Common myeloid progenitor, CD34-positive (primary cell): ENCODE measurements at regions of chr11 and their contacts with region 1.

Region 1: GRCh38 chr11:122754553-122755322 is 83.6 kb upstream of the CRTAM start:
- DNase-seq: peak; percentile 51 to 68 (median 65)
- H3K4me3 ChIP-seq: no peak overlapping the region
- H3K27ac ChIP-seq: no peak overlapping the region
- H3K4me1 ChIP-seq: peaks cover 14 to 76% (median 60%) of the 10 kb centered on the region in 4 experiments
- H3K27me3 ChIP-seq: no peaks in the 10 kb centered on the region

Region 2: DNA sequence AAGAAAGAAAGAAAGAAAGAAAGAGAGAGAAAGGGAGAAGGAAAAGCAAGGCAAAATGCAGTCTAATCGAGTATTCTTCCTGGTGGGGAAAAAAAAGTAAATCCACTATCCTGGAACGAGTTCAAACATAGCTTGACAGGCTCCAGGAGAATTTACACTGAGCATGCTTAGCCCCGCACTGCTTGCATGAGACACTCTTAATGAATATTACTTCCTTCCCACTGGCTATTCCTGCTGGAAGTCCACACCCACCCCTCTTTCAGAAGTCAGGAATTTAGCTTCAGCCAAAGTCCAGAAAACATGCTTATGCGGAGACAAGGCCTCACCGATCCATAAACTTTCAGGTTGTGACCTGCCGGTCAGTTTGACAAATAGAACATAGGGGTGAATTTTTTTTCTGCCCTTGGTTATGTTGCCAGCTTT is 386.9 kb before region 1 on chr11:
- CTCF ChIA-PET with region 1: no interaction called
- POLR2A ChIA-PET with region 1: no interaction called
- DNase-seq: no peak
- H3K4me3 ChIP-seq: no peak overlapping the region
- H3K27ac ChIP-seq: no peak overlapping the region
- H3K4me1 ChIP-seq: no peaks in the 10 kb centered on the region
- H3K27me3 ChIP-seq: no peaks in the 10 kb centered on the region

Region 3: GRCh38 chr11:122478986-122479385 is 275.8 kb before region 1 on chr11:
- CTCF ChIA-PET with region 1: no interaction called
- POLR2A ChIA-PET with region 1: no interaction called
- DNase-seq: no peak
- H3K4me3 ChIP-seq: no peak overlapping the region
- H3K27ac ChIP-seq: no peak overlapping the region
- H3K4me1 ChIP-seq: no peaks in the 10 kb centered on the region
- H3K27me3 ChIP-seq: no peaks in the 10 kb centered on the region

Region 4: GRCh38 chr11:122690801-122691548 is 63.8 kb before region 1 on chr11:
- CTCF ChIA-PET with region 1: interaction called, 66 read pairs
- POLR2A ChIA-PET with region 1: interaction called, 5 read pairs
- DNase-seq: no peak
- H3K4me3 ChIP-seq: peak overlapping the region in 3 of 7 experiments; percentile 8 to 47 (median 23)
- H3K27ac ChIP-seq: peak overlapping the region; percentile 51 to 65
- H3K4me1 ChIP-seq: peaks cover 22 to 71% (median 53%) of the 10 kb centered on the region in 4 experiments
- H3K27me3 ChIP-seq: no peaks in the 10 kb centered on the region

Region 5: GRCh38 chr11:122711831-122712381 is 42.8 kb before region 1 on chr11:
- CTCF ChIA-PET with region 1: interaction called, 114 read pairs
- POLR2A ChIA-PET with region 1: interaction called, 5 read pairs
- DNase-seq: peak; percentile 77 to 95 (median 89)
- H3K4me3 ChIP-seq: peak overlapping the region in 1 of 7 experiments; percentile 19
- H3K27ac ChIP-seq: no peak overlapping the region
- H3K4me1 ChIP-seq: peaks cover 24 to 78% (median 46%) of the 10 kb centered on the region in 4 experiments
- H3K27me3 ChIP-seq: no peaks in the 10 kb centered on the region

Region 6: DNA sequence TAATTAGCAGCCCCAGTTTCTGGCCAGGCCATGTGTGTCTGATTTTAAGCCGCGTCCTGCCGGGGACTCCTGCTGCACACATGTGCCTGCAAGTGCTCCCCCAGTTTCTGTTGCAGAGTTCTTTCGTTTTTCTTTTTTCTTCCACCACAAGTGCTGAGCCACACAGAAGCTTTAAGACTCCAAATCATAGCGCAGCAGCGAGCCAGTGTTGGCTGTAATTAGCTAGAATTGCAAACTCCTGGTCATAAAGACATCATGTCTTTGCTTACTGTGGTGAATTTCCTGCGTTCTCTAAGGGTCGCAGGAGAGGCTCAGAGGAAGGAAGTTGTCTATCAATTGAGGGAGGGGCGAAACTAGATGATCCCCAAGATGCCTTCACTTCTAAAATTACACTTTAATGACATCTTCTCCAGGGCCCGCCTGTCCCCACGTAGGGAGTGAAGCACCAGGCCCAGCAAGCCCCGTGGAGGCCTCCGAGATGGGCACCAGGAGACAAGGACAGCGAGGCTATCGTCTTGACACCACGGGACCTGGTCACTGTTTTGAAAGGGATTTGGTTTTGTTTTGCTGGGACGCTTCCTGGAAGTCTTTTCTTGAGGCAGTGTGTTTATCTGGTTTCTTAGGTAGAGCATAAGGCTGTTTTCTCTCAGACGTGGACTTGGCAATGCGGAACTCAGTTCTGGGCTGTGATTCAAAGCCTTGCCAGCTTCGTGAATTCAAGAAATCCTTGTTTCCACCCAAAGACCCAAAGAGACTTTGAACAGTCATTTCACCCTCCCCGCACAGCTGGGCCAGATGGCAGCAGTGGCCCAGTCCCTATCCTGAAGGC is 27.4 kb before region 1 on chr11:
- CTCF ChIA-PET with region 1: interaction called, 34 read pairs
- POLR2A ChIA-PET with region 1: no interaction called
- DNase-seq: peak in 1 of 3 donors; percentile 50
- H3K4me3 ChIP-seq: peak overlapping the region in 5 of 7 experiments; percentile 28 to 49 (median 32)
- H3K27ac ChIP-seq: peak overlapping the region in 1 of 2 experiments; percentile 3
- H3K4me1 ChIP-seq: peaks cover 16 to 59% (median 44%) of the 10 kb centered on the region in 4 experiments
- H3K27me3 ChIP-seq: no peaks in the 10 kb centered on the region

Region 7: GRCh38 chr11:122772945-122773344 is 18.2 kb after region 1 on chr11:
- CTCF ChIA-PET with region 1: interaction called, 71 read pairs
- POLR2A ChIA-PET with region 1: interaction called, 4 read pairs
- DNase-seq: no peak
- H3K4me3 ChIP-seq: no peak overlapping the region
- H3K27ac ChIP-seq: no peak overlapping the region
- H3K4me1 ChIP-seq: peaks cover 0 to 13% (median 8%) of the 10 kb centered on the region in 4 experiments
- H3K27me3 ChIP-seq: no peaks in the 10 kb centered on the region

Region 8: GRCh38 chr11:122788781-122789535 is 34.2 kb after region 1 on chr11:
- CTCF ChIA-PET with region 1: interaction called, 10 read pairs
- POLR2A ChIA-PET with region 1: no interaction called
- DNase-seq: no peak
- H3K4me3 ChIP-seq: no peak overlapping the region
- H3K27ac ChIP-seq: no peak overlapping the region
- H3K4me1 ChIP-seq: no peaks in the 10 kb centered on the region
- H3K27me3 ChIP-seq: no peaks in the 10 kb centered on the region

Region 9: GRCh38 chr11:122822241-122822640 is 67.5 kb after region 1 on chr11:
- CTCF ChIA-PET with region 1: no interaction called
- POLR2A ChIA-PET with region 1: no interaction called
- DNase-seq: peak in 1 of 3 donors; percentile 53
- H3K4me3 ChIP-seq: no peak overlapping the region
- H3K27ac ChIP-seq: no peak overlapping the region
- H3K4me1 ChIP-seq: peaks cover 10 to 25% (median 14%) of the 10 kb centered on the region in 4 experiments
- H3K27me3 ChIP-seq: no peaks in the 10 kb centered on the region

Region 10: DNA sequence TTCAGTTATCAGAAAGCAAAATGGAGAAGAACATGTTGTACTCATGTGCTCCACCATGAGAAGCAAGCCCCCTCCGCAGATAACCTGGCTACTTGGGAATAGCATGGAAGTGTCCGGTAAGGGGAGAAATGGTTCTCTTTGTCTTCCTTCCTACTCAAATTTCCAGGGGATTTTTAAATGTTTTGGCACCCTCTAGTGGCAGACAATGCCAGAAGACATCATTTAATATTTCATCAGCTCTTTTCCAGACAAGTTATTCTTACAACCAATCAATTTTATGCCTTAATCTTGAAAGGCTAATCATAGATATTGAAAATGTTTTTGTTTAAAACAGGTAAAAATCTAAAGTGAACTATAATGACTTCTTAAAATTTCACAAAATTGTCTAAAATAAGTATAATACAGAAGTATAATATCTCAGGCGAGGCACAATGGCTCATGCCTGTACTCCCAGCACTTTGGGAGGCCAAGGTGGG is 99.3 kb after region 1 on chr11:
- CTCF ChIA-PET with region 1: interaction called, 16 read pairs
- POLR2A ChIA-PET with region 1: no interaction called
- DNase-seq: peak; percentile 71 to 78 (median 74)
- H3K4me3 ChIP-seq: no peak overlapping the region
- H3K27ac ChIP-seq: no peak overlapping the region
- H3K4me1 ChIP-seq: peaks cover 7 to 36% (median 21%) of the 10 kb centered on the region in 4 experiments
- H3K27me3 ChIP-seq: no peaks in the 10 kb centered on the region